CD4-positive, alpha-beta T cell (primary cell): ENCODE measurements at regions of chr7 and their contacts with region 1.

Region 1: DNA sequence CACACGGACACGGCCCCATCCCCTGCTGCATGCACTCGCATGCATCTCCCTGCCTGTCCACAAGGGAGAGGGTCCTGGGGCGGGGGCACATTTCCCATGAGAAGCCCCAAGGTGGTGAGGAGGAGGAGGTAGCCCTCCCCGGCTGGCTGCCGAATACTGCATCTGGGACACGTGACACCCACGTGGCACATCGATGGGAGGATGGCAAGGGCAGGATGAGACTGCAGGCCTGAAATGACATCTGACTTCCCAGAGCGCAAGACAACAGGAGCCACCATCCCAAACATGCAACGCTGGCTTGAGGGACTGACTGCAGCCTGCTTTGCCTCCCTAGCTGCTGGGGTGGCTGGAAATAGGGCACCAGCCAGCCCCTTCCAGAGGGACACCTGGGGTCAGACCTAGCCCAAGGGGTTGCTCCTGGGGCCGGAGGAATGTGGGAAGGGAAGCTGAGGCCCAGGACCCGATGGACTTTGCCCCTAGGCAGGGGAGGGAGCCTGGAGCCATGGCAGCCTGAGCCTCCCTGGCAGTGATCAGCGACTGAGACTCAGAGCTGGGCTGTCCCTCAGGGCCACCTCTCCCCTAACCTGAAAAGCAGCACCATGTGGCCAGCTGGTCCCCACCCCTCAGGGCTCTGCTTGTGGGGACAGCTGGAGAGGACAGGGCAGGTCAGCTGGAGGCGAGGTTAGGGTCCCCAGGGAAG is 16.1 kb downstream of the BUD23 start:
- DNase-seq: no peak
- ATAC-seq: no peak
- H3K4me3 ChIP-seq: no peak overlapping the region
- H3K4me3 Mint-ChIP-seq: no peak overlapping the region
- H3K27ac ChIP-seq: no peak overlapping the region
- H3K27ac Mint-ChIP-seq: no peak overlapping the region
- H3K4me1 ChIP-seq: peaks cover 4% of the 10 kb centered on the region
- H3K4me1 Mint-ChIP-seq: peaks cover 4% of the 10 kb centered on the region
- H3K27me3 ChIP-seq: no peaks in the 10 kb centered on the region
- H3K27me3 Mint-ChIP-seq: no peaks in the 10 kb centered on the region
- CTCF ChIP-seq: no peak

Region 2: DNA sequence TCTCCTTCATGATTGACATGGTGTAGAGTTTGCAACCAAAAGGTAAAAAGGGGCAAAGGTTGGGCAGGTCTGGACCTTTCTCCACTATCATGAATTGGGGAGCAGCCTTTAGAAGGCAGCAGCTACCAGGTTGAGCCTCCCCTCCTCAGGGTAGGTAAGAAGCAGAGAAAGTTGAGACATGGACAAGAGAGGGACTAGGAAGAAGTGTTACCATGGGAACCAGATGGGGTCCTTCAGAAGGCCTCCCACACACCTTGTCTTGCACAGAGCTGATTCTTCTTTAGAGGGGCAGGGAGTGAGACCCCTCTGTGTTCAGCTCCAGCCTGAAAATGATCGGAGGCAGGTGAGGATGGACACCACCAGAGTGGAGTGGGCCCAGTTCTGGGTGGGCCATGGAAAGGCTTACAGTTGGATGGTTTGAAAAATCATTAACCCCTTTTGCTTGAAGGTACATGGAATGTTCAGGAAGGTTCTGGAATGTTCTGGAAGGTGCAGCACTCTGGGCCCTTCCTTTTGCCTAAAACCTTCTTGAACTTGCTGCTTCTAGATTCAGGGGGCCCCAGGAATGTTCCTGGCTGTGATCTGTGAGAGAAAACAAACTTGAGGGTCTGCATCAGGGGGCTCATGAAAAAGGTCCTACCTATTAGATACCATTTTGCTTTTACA is 24.9 kb before region 1 on chr7:
- CTCF ChIA-PET with region 1: no interaction called
- POLR2A ChIA-PET with region 1: no interaction called
- intact Hi-C with region 1: loop called in 1 of 2 experiments (anchors 2 kb)
- DNase-seq: no peak
- ATAC-seq: no peak
- H3K4me3 ChIP-seq: no peak overlapping the region
- H3K4me3 Mint-ChIP-seq: no peak overlapping the region
- H3K27ac ChIP-seq: no peak overlapping the region
- H3K27ac Mint-ChIP-seq: no peak overlapping the region
- H3K4me1 ChIP-seq: no peaks in the 10 kb centered on the region
- H3K4me1 Mint-ChIP-seq: no peaks in the 10 kb centered on the region
- H3K27me3 ChIP-seq: no peaks in the 10 kb centered on the region
- H3K27me3 Mint-ChIP-seq: no peaks in the 10 kb centered on the region
- CTCF ChIP-seq: no peak